Esophagus muscularis mucosa (tissue), 4 donors: ENCODE measurements at regions of chr19 and their contacts with region 1.

Region 1: DNA sequence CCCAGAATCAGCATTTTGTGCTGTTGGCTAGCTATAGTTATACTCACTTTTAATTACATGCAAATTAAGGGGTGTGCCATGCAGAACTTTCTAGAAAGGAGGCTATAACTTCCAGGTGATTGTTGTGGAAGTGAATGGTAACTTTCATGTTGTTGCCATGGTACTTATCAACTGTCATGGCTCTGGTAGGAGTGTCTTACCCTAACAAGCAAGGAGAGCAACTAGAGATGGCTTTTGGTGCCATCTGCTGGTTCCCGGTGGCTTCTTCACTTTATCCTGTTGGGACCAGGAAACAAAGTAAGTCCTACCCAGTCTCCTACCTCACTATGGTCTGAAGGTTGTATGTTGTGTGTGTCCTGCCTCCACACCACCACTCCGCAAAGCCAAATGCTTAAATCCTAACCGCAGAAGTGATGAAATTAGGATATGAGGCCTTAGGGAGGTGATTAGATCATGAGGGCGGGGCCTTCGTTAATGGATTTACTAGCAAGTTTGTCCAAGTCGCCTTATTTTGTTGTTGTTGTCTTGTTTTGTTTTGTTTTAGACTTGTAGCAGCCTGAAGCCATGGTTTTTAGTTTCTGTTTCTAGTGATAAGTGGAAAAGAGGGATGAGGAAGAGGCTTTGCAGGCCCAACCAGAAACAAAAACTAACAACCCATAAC is 22.6 kb downstream of the FBXL12 start:
- DNase-seq: peak; percentile 94
- H3K4me3 ChIP-seq: no peak overlapping the region
- H3K27ac ChIP-seq: peak overlapping the region in 1 of 4 donors; percentile 1
- H3K4me1 ChIP-seq: peaks cover 2 to 19% (median 8%) of the 10 kb centered on the region in 4 donors
- H3K27me3 ChIP-seq: no peaks in the 10 kb centered on the region
- CTCF ChIP-seq: peak; percentile 75 to 91 (median 81)
- EP300 ChIP-seq: no peak
- POLR2A ChIP-seq: no peak

Region 2: GRCh38 chr19:9140159-9140874 is 655.9 kb before region 1 on chr19 and contains the start of gene ZNF317:
- intact Hi-C with region 1: loop called (anchors 10 kb)
- DNase-seq: peak; percentile 96
- H3K4me3 ChIP-seq: peak within 1 kb of the TSS; percentile 71 to 88 (median 78)
- H3K27ac ChIP-seq: peak within 1 kb of the TSS; percentile 88 to 93 (median 89)
- H3K4me1 ChIP-seq: peaks cover 15 to 31% (median 28%) of the 10 kb centered on the region in 4 donors
- H3K27me3 ChIP-seq: no peaks in the 10 kb centered on the region
- CTCF ChIP-seq: peak in 1 of 3 experiments; percentile 5
- EP300 ChIP-seq: no peak
- POLR2A ChIP-seq: peak; percentile 11
- total RNA-seq, gene ZNF317: 17.6 to 24.8 (median 21.5) TPM

Region 3: DNA sequence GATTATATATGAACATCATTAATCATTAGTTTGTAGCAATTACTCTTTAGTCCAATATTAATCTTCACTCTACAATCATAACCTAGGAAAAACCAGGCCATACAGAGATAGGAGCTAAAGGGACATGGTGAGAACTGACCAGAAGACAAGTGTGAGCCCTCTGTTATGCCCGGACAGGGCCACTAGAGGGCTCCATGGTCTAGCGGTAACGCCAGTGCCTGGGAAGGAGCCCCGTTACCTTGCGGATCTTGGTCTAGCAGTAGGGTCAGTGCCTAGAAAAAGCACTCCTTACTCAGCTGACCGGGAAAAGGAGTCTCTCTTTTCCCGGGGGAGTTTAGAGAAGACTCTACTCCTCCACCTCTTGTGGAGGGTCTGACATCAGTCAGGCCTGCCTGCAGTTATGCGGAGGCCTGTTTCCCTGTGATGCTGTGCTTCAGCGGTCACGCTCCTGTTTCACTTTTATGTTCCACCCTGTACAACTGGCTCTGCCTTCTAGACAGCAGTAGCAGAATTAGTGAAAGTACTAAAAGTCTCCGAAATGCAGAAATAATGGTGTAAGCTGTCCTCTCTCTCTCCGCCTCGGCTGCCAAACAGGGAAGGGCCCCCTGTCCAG is 590.6 kb before region 1 on chr19:
- intact Hi-C with region 1: loop called (anchors 5 kb)
- DNase-seq: no peak
- H3K4me3 ChIP-seq: peak overlapping the region; percentile 36 to 45 (median 41)
- H3K27ac ChIP-seq: no peak overlapping the region
- H3K4me1 ChIP-seq: peaks cover 0 to 5% (median 2%) of the 10 kb centered on the region in 4 donors
- H3K27me3 ChIP-seq: peaks cover 0 to 17% (median 0%) of the 10 kb centered on the region in 4 donors
- CTCF ChIP-seq: peak; percentile 82 to 91 (median 86)
- EP300 ChIP-seq: no peak
- POLR2A ChIP-seq: no peak

Region 4: DNA sequence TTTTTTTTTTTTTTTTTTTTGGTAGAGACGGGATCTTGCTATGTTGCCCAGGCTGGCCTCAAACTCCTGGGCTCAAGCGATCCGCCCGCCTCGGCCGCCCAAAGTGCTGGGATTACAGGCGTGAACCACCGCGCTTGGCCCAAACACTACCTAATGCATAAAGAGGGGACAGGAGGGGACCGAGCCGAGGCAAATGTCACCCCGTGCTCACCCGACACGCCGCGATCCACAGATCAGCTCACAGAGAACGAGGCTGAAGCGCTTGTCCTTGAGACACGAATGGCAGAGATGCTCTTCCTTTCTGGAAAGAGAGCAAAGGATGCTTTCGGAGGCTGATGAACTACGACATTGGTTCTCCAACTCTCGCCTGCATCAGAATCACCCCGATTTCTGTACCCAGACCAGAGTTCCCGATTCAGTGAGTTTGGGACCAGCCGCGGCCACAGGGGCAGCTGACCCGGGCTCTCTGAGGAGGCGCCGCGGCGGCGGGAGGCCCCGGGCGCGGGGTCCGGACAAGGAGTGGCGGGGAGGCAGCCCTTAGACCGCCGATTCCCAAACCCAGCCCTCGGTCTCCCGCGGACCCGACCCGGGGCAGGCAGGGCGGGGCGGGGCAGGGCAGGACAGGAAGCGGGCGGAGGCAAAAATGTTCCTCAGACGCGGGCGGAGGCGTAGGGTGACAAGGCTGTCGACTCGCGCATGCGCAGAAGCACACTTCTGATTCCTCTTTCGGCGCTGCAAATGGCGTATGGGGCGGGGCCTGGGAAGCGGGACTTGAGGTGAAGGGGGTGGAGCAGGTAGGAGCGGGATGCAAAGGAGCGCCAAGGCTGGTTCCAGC is 486.9 kb before region 1 on chr19 and contains the start of gene ZNF699:
- intact Hi-C with region 1: loop called (anchors 5 kb)
- DNase-seq: peak; percentile 99
- H3K4me3 ChIP-seq: peak within 1 kb of the TSS; percentile 86 to 94 (median 89)
- H3K27ac ChIP-seq: peak within 1 kb of the TSS; percentile 93 to 98 (median 98)
- H3K4me1 ChIP-seq: peaks cover 7 to 32% (median 25%) of the 10 kb centered on the region in 4 donors
- H3K27me3 ChIP-seq: no peaks in the 10 kb centered on the region
- CTCF ChIP-seq: peak in 1 of 3 experiments; percentile 17
- EP300 ChIP-seq: no peak
- POLR2A ChIP-seq: peak; percentile 60
- total RNA-seq, gene ZNF699: 14.2 to 19.1 (median 14.8) TPM

Region 5: DNA sequence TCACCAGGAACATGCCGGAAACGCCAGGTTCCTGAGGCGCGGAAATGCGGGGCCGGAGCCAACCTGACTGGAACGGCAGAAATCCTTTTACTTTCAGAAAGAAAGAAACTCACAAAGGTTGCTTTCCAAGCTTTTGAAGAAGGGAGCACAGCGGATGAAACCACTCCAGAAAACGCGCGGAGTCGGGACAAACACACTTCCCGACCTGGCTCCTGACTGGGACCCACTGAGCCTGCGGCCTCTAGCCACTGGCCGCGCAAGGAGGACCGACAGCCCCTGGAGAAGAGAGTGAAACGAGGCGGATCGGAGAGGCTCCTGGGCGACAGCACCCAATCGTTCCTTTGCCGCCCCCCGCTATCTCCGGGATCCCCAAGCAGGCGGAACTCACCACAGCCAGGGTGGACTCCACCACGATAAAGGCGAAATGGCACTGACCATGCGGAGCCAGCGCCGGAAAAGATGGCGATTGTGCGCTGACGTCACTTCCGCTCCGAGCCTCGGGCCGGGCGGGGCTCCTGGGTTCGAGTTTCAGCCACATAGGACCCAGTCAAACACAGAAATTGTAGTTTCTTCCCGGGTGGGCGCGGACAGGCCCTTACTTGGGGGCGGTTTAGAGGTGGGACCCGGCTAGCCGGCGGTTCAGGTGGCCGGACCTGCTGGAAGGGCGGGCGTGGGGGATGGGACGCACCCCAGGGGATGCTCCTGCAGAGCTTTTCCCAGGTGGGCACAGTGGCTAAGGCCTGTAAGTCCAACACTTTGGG is 212.0 kb before region 1 on chr19 and contains the start of gene ZNF121:
- intact Hi-C with region 1: loop called (anchors 2 kb)
- DNase-seq: peak; percentile 98
- H3K4me3 ChIP-seq: peak within 1 kb of the TSS; percentile 70 to 81 (median 74)
- H3K27ac ChIP-seq: peak within 1 kb of the TSS; percentile 86 to 96 (median 91)
- H3K4me1 ChIP-seq: peaks cover 12 to 35% (median 23%) of the 10 kb centered on the region in 4 donors
- H3K27me3 ChIP-seq: peaks cover 0 to 15% (median 0%) of the 10 kb centered on the region in 4 donors
- CTCF ChIP-seq: no peak
- EP300 ChIP-seq: no peak
- POLR2A ChIP-seq: peak; percentile 41
- total RNA-seq, gene ZNF121: 18.3 to 31.1 (median 25.5) TPM

Region 6: GRCh38 chr19:9621156-9622037 is 174.8 kb before region 1 on chr19 and contains the start of gene ZNF561:
- intact Hi-C with region 1: loop called (anchors 2 kb)
- DNase-seq: peak; percentile 95
- H3K4me3 ChIP-seq: peak within 1 kb of the TSS; percentile 60 to 97 (median 88)
- H3K27ac ChIP-seq: peak within 1 kb of the TSS; percentile 87 to 94 (median 94)
- H3K4me1 ChIP-seq: peaks cover 22 to 66% (median 58%) of the 10 kb centered on the region in 4 donors
- H3K27me3 ChIP-seq: peaks cover 0 to 4% (median 0%) of the 10 kb centered on the region in 4 donors
- CTCF ChIP-seq: peak in 1 of 3 experiments; percentile 24
- EP300 ChIP-seq: no peak
- POLR2A ChIP-seq: no peak
- total RNA-seq, gene ZNF561: 26.8 to 40.3 (median 35.8) TPM

Region 7: GRCh38 chr19:9818734-9819589 is 22.7 kb after region 1 on chr19 and contains the start of gene FBXL12:
- intact Hi-C with region 1: loop called (anchors 2 kb)
- DNase-seq: peak; percentile 100
- H3K4me3 ChIP-seq: peak within 1 kb of the TSS; percentile 92 to 99 (median 94)
- H3K27ac ChIP-seq: peak within 1 kb of the TSS; percentile 92 to 95 (median 92)
- H3K4me1 ChIP-seq: peaks cover 12 to 36% (median 30%) of the 10 kb centered on the region in 4 donors
- H3K27me3 ChIP-seq: no peaks in the 10 kb centered on the region
- CTCF ChIP-seq: no peak
- EP300 ChIP-seq: no peak
- POLR2A ChIP-seq: peak; percentile 54
- total RNA-seq, gene FBXL12: 15.8 to 32.7 (median 29.2) TPM